CD8-positive, alpha-beta memory T cell (primary cell): ENCODE measurements at regions of chr1 and their contacts with region 1.

Region 1: DNA sequence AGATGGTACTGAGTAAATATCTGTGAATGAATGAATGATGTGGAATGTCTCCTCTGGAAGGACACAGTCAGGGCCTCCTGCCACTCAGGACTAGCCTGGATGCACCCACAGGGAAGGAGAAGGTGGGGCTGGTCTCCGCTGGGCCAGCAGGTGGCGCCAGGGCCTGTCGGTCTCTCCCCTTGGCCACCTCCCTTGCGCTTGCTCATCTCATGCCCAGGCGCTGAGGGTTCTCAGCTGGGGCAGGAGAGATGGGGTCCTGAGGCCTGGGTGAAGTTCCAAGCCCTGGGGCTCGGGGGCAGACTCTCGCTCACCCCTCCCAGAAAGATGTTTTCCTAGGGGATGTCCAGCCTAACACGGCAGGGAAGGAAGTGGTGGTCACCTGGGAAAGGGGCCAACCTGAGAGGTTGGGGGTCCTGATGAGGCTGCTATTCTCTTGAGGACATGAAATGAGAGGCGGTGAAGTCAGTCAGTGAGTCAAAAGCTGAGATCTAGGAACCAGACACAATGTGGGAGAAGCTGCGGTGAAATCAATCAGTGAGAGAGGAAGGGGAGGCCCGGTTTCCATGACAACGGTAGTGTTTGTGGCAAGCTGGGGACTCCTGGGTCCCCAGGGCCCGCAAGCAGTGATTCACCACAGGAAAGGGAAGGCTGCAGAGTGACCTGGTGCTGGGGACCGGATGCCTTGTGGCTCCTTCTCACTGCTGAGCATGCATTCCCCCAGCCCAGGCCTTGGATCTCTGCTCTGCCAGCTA is 14.6 kb upstream of the MEX3A start:
- DNase-seq: peak; percentile 77 to 94 (median 87)
- H3K4me3 ChIP-seq: no peak overlapping the region
- H3K4me3 Mint-ChIP-seq: peak overlapping the region; percentile 23 to 91 (median 64)
- H3K27ac ChIP-seq: peak overlapping the region; percentile 68
- H3K27ac Mint-ChIP-seq: peak overlapping the region; percentile 93 to 100 (median 99)
- H3K4me1 ChIP-seq: peaks cover 22% of the 10 kb centered on the region
- H3K4me1 Mint-ChIP-seq: peaks cover 32 to 46% (median 37%) of the 10 kb centered on the region in 3 donors
- H3K27me3 ChIP-seq: no peaks in the 10 kb centered on the region
- H3K27me3 Mint-ChIP-seq: peaks cover 0 to 5% of the 10 kb centered on the region in 2 donors

Region 2: DNA sequence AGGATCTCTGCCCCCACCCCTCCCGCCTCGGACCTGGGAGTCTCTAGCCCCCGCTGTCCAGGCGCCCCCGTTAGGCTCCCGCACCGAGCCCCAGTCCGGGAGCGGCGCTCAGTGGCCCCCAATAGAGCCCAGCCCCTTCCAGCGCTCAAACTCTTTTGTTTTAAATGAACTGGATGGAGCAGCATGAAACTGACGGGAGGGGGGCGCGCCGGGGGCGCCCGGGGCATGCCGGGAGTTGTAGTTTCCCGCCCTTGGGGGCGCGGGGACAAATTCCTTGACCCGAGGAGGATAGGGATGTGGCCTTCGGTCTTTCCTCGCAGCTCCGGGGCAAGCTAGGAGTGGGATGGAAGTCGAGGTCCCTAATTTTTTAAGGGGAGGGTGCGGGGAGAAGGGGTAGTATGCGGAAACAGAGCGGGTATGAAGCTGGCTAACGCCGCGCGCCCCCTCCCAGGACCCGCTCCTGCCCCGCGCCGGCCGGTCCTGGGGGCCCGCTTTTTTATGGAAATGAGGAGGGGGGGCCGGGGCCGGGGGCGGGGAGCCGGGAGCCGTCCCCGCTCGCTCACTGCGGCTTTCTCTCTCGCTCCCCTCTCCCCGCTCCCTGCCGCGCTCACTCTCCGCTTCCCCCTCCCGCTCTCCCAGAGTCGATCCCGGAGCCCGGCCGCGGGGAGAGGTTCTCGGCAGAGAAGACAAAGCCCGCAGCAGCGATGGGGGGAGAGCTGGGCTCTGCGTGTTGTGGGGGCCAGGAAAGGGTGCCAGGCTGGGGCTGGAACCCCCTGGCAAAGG is 14.3 kb before region 1 on chr1 and contains the start of gene MEX3A:
- CTCF ChIA-PET with region 1: interaction called, 10 read pairs
- POLR2A ChIA-PET with region 1: interaction called, 3 read pairs
- DNase-seq: peak; percentile 46 to 73 (median 56)
- H3K4me3 ChIP-seq: peak within 1 kb of the TSS; percentile 75
- H3K4me3 Mint-ChIP-seq: peak within 1 kb of the TSS; percentile 78 to 95 (median 85)
- H3K27ac ChIP-seq: peak within 1 kb of the TSS; percentile 24
- H3K27ac Mint-ChIP-seq: peak within 1 kb of the TSS in 5 of 8 donors; percentile 29 to 86 (median 82)
- H3K4me1 ChIP-seq: peaks cover 6% of the 10 kb centered on the region
- H3K4me1 Mint-ChIP-seq: peaks cover 6 to 16% (median 8%) of the 10 kb centered on the region in 3 donors
- H3K27me3 ChIP-seq: peaks cover 19% of the 10 kb centered on the region
- H3K27me3 Mint-ChIP-seq: peaks cover 19 to 40% of the 10 kb centered on the region in 2 donors
- total RNA-seq, gene MEX3A: 0.24 to 1.0 TPM

Region 3: DNA sequence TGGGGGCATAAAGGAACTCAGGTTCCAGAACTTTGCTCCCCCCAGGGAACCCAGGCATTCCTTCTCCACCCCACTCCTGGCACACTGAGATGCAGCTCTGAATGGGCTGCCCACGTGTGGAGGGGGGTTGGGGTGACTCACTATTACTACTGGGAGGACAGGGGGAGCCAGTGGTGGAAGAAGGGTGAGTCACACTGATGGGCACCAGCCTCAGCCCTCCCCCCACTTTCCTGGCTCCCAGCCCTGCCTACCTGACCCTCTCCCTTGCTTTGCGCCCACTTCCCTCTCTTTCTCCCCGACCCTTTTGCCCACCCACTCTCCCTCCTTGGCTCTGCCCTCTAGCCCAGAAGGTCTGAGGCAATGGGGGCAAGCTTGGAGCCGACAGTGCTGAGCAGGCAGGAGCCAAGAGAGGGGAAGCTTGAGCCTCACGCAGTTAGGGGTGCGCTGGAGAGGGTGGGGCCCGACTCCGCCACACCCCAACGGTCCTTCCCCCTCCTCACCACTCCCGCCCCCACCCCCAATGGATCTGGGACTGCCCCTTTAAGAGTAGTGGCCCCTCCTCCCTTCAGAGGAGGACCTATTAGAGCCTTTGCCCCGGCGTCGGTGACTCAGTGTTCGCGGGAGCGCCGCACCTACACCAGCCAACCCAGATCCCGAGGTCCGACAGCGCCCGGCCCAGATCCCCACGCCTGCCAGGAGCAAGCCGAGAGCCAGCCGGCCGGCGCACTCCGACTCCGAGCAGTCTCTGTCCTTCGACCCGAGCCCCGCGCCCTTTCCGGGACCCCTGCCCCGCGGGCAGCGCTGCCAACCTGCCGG is 17.5 kb after region 1 on chr1 and contains the start of gene LMNA:
- CTCF ChIA-PET with region 1: interaction called, 702 read pairs
- POLR2A ChIA-PET with region 1: interaction called, 10 read pairs
- DNase-seq: peak; percentile 34 to 91 (median 73)
- H3K4me3 ChIP-seq: peak within 1 kb of the TSS; percentile 77
- H3K4me3 Mint-ChIP-seq: peak within 1 kb of the TSS; percentile 90 to 98 (median 93)
- H3K27ac ChIP-seq: peak within 1 kb of the TSS; percentile 93
- H3K27ac Mint-ChIP-seq: peak within 1 kb of the TSS; percentile 81 to 100 (median 97)
- H3K4me1 ChIP-seq: peaks cover 17% of the 10 kb centered on the region
- H3K4me1 Mint-ChIP-seq: peaks cover 24 to 48% (median 32%) of the 10 kb centered on the region in 3 donors
- H3K27me3 ChIP-seq: peaks cover 3% of the 10 kb centered on the region
- H3K27me3 Mint-ChIP-seq: peaks cover 0 to 8% of the 10 kb centered on the region in 2 donors
- total RNA-seq, gene LMNA: 325 to 335 TPM